ENCODE measurements at regions of chr2 and their contacts with region 1.

Region 1: GRCh38 chr2:80499095-80499494 is 194.5 kb upstream of the LRRTM1 start:
- DNase-seq: peak in 7 of 10 donors; percentile 11 to 84 (median 46)
- H3K4me3 ChIP-seq: no peak overlapping the region
- H3K27ac ChIP-seq: no peak overlapping the region
- H3K27me3 ChIP-seq: no peaks in the 10 kb centered on the region
- CTCF ChIP-seq: peak; percentile 54 to 94 (median 75)

Region 2: GRCh38 chr2:80185091-80185490 is 314.0 kb before region 1 on chr2:
- intact Hi-C with region 1: no loop called
- DNase-seq: no peak
- H3K4me3 ChIP-seq: no peak overlapping the region
- H3K27ac ChIP-seq: no peak overlapping the region
- H3K27me3 ChIP-seq: no peaks in the 10 kb centered on the region
- CTCF ChIP-seq: no peak

Region 3: DNA sequence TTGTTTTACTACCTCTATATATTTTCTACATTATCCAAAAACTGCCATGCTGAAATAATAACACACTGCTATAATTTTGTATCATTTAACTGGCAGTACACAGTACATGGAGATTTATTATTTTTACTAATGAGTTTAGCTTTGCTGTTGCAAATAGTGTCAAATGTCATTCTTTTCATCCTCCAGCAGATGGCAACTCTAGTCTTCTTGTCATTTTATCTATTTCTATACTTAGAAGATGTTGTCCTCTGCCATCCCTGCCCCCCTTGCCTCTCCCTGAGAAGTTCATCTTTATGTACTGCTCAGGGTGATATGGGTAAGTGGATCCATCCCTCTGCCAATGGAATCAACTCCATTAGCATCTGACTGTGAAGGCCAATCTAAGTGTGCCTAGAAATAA is 172.9 kb before region 1 on chr2:
- intact Hi-C with region 1: loop called (anchors 1 to 5 kb)
- DNase-seq: peak in 1 of 10 donors; percentile 49
- H3K4me3 ChIP-seq: no peak overlapping the region
- H3K27ac ChIP-seq: peak overlapping the region in 42 of 59 donors; percentile 8 to 77 (median 56)
- H3K27me3 ChIP-seq: peaks cover 0 to 24% (median 0%) of the 10 kb centered on the region in 45 donors
- CTCF ChIP-seq: peak; percentile 40 to 89 (median 66)

Region 4: DNA sequence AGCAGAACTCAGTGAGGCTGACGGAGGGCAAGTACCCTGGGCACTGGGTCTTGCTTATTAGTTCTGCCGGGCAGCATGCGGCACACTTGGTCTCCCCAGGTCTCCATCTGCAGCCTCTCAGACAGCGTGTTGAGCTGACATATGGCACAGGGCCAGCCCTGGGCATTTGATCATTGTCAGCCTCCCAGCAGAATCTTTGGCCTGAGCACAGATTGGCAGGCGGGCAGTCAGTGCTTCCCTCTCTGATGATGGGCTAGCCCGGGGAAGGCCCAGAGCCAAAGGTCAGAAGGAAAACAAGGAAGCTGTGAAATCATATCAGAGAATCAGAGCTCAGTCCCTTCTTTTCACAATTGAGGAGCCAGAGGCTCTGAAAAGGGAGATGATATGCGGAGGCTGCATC is 44.5 kb before region 1 on chr2:
- intact Hi-C with region 1: loop called in 1 of 2 experiments (anchors 5 kb)
- DNase-seq: peak; percentile 73 to 96 (median 86)
- H3K4me3 ChIP-seq: peak overlapping the region in 22 of 59 donors; percentile 3 to 43 (median 11)
- H3K27ac ChIP-seq: peak overlapping the region in 39 of 59 donors; percentile 10 to 81 (median 43)
- H3K27me3 ChIP-seq: no peaks in the 10 kb centered on the region
- CTCF ChIP-seq: peak in 3 of 56 donors; percentile 8 to 31 (median 13)

Region 5: GRCh38 chr2:80573950-80574349 is 74.9 kb after region 1 on chr2:
- intact Hi-C with region 1: no loop called
- DNase-seq: no peak
- H3K4me3 ChIP-seq: no peak overlapping the region
- H3K27ac ChIP-seq: no peak overlapping the region
- H3K27me3 ChIP-seq: no peaks in the 10 kb centered on the region
- CTCF ChIP-seq: no peak

Region 6: GRCh38 chr2:80655265-80655664 is 156.2 kb after region 1 on chr2:
- intact Hi-C with region 1: no loop called
- DNase-seq: no peak
- H3K4me3 ChIP-seq: no peak overlapping the region
- H3K27ac ChIP-seq: no peak overlapping the region
- H3K27me3 ChIP-seq: no peaks in the 10 kb centered on the region
- CTCF ChIP-seq: no peak

Measured in dorsolateral prefrontal cortex (tissue), 120 donors.